AG04449 (cell line): ENCODE measurements at regions of chr20 and their contacts with region 1.

Region 1: DNA sequence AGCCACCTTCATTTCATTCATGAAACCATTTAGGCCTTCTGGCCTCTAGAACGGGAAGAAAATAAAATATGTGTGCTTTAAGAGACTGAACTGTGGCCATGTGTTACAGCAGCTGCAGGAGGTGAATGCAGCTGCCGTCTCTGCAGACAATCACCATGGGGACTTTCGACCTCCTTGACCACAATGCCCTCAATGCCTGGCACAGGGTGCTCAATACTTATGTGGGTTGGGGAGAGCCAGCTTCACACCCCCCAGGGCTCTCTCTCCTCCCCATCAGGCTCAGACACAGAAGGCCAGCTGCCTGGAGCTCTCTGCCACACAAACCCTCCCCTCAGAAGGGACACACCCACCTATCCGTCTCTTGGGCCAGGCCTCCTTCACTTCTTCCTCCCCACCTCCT is 43.5 kb downstream of the ANKRD60 start:
- DNase-seq: no peak
- H3K4me3 ChIP-seq: no peak overlapping the region
- CTCF ChIP-seq: no peak

Region 2: GRCh38 chr20:58196008-58196820 is 11.2 kb after region 1 on chr20:
- CTCF ChIA-PET with region 1: interaction called, 10 read pairs
- POLR2A ChIA-PET with region 1: no interaction called
- DNase-seq: no peak
- H3K4me3 ChIP-seq: no peak overlapping the region
- CTCF ChIP-seq: no peak